AG04449 (cell line): ENCODE measurements at regions of chr4 and their contacts with region 1.

Region 1: GRCh38 chr4:174005422-174005821 is 278.0 kb downstream of the FBXO8 start:
- DNase-seq: no peak
- H3K4me3 ChIP-seq: no peak overlapping the region
- CTCF ChIP-seq: no peak

Region 2: DNA sequence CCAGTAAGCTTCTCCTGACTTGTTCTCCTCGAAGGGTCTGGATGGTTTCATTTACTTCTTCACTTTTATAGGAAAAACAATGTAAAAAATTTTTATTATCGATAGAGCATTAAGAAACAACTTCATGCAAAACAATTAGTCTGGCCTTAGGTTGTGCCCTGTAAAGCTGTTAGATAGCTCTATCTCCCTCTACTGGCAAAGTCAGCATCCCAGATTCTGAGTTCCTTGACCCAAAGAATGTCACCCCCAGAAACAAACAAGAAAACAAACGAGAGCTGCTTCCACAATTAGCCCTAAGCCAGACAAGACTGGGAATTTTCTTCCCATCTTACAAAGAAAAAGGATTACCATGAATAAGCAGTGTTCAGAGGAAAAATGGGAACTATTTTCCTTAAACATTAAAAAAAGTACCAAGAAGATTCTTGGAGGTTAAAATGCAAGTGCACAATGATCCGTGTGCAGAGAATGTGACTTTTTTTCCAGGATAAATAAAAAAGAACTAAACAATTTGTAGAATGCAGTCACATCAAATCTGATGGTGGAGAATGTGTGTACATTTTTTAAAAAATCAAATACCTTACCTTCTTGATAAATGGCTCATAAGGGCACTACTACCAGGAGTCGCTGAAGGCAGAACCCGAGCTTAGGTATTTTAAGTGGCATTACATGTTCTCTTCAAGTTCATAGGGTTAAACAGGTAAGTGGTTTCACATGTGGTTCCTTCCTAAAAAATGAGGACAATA is 15.1 kb before region 1 on chr4:
- CTCF ChIA-PET with region 1: interaction called, 10 read pairs
- POLR2A ChIA-PET with region 1: no interaction called
- DNase-seq: peak; percentile 9
- H3K4me3 ChIP-seq: no peak overlapping the region
- CTCF ChIP-seq: peak; percentile 49

Region 3: DNA sequence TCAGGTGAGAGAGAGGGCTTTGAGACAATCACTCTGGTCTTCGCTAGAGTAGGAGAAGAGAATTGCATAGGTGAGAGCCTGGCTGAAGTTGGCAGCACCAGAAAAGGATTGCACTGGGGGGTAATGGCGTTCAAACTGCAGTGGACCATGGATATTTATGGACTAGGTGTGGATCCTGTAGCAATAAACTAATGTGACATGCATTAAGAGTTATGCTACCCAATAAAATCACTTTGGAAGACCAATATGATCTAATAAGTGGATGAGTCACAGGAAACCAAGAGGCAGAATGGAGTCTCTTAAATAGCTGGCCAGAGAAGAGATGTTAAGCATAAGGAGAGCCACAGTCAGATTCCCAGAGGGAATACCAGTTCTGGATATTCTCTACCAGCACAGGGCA is 18.2 kb after region 1 on chr4:
- CTCF ChIA-PET with region 1: no interaction called
- POLR2A ChIA-PET with region 1: no interaction called
- DNase-seq: no peak
- H3K4me3 ChIP-seq: no peak overlapping the region
- CTCF ChIP-seq: no peak

Region 4: DNA sequence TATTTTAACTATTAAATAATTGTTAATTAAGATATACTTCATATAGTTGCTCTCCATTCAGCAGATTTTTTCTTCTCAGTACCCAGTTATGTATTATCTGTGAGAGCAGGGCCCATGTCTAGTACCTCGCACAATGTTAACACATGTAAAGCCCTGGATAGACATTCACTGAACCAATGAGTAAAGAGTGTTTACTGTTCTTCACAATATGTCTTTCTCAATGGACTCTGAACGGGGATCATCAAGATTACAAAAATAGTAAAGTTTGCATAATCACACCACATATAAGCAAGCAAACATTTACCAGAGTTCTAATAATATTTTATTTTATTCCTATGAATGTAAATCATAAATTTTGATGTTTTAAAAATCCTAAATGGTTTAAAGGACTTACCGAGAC is 230.9 kb after region 1 on chr4:
- CTCF ChIA-PET with region 1: no interaction called
- POLR2A ChIA-PET with region 1: no interaction called
- DNase-seq: no peak
- H3K4me3 ChIP-seq: no peak overlapping the region
- CTCF ChIP-seq: no peak